ENCODE measurements at regions of chr3 and their contacts with region 1.

Region 1: DNA sequence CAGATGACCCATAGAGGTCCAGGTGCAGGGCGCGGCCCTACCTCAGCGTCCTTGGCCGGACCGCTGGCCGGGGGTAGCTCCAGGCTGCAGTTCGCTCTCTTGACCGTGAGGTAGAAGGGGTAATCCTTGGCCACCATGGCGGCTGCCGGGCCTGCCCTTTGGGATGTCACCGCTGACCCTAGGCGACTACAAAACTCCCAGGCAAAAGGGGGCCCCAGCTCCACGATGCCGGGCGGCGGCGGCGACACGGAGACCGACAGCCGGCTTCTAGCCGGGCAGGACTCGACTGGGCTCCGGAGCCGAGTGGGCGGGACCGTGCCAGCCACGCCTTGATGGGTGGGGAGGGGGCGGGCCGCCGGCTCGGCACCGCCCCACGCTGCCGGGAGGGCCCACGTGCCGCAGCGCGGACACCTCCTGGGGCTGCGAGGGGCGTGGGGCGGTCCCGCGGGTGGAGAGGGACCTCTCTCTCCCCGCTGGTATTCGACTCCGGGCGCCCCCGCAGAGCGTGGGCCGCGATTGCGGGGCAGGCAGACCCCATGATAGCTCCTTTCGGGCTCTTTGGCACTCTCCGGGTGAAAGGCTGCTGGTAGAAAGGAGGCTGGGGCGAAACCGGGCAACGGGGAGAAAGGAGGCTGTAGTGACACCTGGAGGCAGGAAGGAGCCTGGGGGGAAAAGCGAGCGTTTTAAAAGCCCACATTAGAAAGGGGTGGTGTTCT is at the start of gene ARHGEF3:
- DNase-seq: peak; percentile 90
- ATAC-seq: peak; percentile 98
- total RNA-seq, gene ARHGEF3: 11.9 to 16.8 TPM

Region 2: DNA sequence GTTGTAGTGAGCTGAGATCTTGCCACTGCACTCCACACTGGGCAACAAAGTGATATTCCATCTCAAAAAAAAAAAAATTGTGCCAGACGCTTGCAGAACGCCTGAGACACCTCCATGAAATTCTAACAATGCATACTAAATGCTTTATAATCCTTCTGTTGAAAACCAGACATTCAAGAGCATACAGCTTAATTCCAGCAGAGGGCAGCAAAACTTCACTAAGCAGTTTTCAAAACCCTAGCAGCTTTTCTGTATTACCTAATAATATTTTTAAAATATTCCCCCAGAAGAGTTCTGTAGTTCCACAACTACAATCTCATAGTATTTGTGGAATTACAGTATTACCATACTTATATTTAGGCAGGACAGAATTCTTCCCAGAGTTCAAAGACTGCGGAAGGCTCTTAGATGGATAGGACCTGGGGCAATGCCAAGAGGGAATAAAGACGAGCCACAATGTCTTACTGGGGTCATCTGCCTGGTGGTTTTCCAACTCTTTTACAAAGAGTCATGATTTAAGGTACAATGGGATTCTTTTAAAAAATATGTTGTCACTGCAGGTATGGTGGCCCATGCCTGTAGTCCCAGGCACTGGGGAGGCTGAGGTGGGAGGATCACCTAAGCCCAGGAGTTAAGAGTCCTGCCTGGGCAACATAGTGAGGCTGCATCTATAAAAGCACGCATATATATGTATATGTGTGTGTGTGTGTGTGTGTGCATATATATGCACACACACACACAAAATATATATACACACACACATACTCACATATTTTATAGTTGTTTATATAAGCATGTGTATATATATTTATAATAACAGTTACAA is 99.1 kb before region 1 on chr3:
- intact Hi-C with region 1: loop called (anchors 2 to 5 kb)
- DNase-seq: no peak
- ATAC-seq: peak; percentile 27 to 57

Region 3: GRCh38 chr3:56758539-56758981 is 43.3 kb before region 1 on chr3:
- intact Hi-C with region 1: loop called in 1 of 2 experiments (anchors 5 kb)
- DNase-seq: no peak
- ATAC-seq: peak in 1 of 2 donors; percentile 47

Region 4: GRCh38 chr3:56894881-56895431 is 93.1 kb after region 1 on chr3:
- intact Hi-C with region 1: loop called in 1 of 2 experiments (anchors 10 kb)
- DNase-seq: peak; percentile 20
- ATAC-seq: peak; percentile 70 to 77

Region 5: DNA sequence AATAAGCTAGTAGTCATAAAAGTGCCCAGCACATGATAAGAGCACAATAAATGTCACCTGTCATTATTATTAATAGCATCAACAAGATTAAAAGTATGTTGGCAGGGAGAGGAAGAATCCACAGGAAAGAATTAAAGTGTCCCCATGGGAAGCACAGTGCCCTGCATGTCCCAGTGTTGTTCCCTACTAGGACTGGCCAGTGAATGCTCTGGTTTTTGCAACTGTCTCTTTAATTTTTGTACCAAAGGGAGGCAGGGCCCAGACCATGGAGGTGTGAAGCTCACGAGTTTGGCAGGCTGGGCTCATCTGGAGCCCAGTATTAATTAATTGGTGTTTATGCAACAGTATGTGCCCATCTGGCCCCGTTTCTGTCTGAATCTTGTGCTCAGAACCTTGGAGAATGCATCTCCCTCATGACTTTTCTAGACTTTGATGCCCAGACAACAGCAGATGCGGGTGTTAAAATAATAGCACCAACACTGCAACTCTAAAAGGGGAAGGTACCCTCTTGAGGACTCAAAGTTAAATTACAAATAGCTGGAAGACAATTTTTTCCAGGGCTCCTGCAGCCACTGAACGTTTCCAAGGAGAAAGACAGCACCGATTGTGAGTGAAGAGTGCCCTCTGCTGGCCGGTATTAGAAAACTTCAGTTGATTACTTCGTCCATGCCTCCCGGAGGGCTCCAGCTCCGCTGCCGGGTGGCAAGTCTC is 186.8 kb after region 1 on chr3:
- intact Hi-C with region 1: loop called (anchors 2 to 5 kb)
- DNase-seq: peak; percentile 82
- ATAC-seq: peak; percentile 85 to 87